Endothelial cell of umbilical vein (primary cell): ENCODE measurements at regions of chr2 and their contacts with region 1.

Region 1: DNA sequence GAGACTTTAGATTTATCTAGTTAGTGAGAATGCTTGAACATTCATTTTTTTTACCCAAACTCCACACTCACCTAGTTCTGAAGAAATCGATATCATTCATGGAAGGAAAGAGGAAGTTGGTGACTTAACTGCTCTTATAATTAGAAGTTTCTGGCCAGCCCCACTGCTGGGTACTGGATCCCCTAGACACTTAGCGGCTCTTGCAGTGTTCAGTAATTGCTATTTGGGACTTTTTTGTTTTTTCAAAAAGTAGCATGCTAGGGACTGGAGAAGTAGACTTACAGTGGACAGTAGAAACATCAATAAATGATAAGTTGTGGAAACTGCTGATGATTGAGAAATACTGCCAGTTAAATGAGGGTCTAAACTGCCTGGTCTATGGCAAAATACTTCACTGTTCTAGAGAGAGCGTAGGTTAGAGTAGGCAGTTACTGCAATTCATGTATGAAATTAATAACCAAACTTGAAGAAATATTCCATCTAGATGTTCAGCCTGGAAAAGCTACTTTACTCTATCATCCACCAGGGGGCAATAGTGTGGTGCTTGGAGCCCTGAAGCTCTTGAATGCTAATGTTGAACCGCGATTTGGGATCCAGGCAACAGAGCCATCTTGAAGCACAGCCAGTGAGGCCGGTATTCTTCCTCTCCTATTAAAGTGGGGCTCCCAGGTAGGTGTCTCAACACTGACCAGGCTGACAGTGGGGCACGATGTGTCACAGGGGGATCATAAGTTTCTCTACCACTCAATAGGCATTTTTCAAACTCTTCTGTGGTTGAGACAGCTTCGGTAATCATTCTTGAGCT is 146.1 kb upstream of the SESTD1 start:
- DNase-seq: peak; percentile 60
- H3K4me3 ChIP-seq: no peak overlapping the region
- H3K27ac ChIP-seq: no peak overlapping the region
- H3K4me1 ChIP-seq: no peaks in the 10 kb centered on the region
- H3K27me3 ChIP-seq: no peaks in the 10 kb centered on the region
- CTCF ChIP-seq: peak; percentile 67 to 68
- POLR2A ChIP-seq: no peak

Region 2: DNA sequence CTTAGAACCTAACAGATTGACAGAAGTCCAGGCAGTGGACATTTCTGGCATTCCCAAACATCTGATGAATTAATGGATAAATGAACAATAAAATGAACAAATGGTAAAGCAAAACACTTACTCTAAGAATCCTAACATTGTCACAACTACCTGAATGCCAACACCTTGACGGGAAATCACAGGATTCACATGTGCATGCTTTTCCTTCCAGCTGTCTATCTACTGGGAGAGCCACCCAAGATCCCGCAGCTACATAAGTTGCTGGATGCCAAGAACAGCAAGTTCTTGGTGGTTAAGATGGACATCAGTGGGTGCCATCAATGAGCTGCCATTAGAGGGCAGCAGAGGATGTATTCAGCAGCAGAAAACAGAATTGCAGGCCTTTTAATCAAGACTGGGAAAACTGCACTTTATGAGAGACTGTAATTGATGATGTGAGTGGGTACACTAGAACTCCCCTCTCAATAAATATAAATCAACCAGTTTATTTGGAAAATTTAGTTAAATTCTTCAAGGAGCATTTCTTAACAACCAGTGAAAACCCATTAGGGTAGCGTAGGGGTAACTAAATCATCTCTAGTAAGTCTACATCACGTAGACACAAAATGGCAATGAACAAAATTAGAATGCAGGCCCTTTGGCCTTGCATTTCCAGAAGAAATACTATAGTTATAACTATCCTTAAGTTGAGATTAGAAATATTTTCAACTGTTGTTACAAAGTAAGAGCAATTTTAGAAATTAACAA is 191.7 kb before region 1 on chr2:
- CTCF ChIA-PET with region 1: interaction called, 34 read pairs
- POLR2A ChIA-PET with region 1: no interaction called
- dilution Hi-C with region 1: no loop called
- intact Hi-C with region 1: loop called (anchors 1 kb)
- DNase-seq: peak; percentile 90
- H3K4me3 ChIP-seq: no peak overlapping the region
- H3K27ac ChIP-seq: no peak overlapping the region
- H3K4me1 ChIP-seq: no peaks in the 10 kb centered on the region
- H3K27me3 ChIP-seq: no peaks in the 10 kb centered on the region
- CTCF ChIP-seq: peak; percentile 82 to 85
- POLR2A ChIP-seq: no peak

Region 3: GRCh38 chr2:179422037-179422643 is 11.4 kb after region 1 on chr2:
- CTCF ChIA-PET with region 1: interaction called, 38 read pairs
- POLR2A ChIA-PET with region 1: no interaction called
- dilution Hi-C with region 1: no loop called
- intact Hi-C with region 1: no loop called
- DNase-seq: peak; percentile 68
- H3K4me3 ChIP-seq: no peak overlapping the region
- H3K27ac ChIP-seq: no peak overlapping the region
- H3K4me1 ChIP-seq: no peaks in the 10 kb centered on the region
- H3K27me3 ChIP-seq: peaks cover 2 to 5% of the 10 kb centered on the region in 2 experiments
- CTCF ChIP-seq: peak; percentile 74 to 79
- POLR2A ChIP-seq: no peak

Region 4: GRCh38 chr2:179751163-179751809 is 340.5 kb after region 1 on chr2:
- CTCF ChIA-PET with region 1: interaction called, 27 read pairs
- POLR2A ChIA-PET with region 1: no interaction called
- dilution Hi-C with region 1: no loop called
- intact Hi-C with region 1: loop called (anchors 1 kb)
- DNase-seq: peak; percentile 42
- H3K4me3 ChIP-seq: no peak overlapping the region
- H3K27ac ChIP-seq: no peak overlapping the region
- H3K4me1 ChIP-seq: no peaks in the 10 kb centered on the region
- H3K27me3 ChIP-seq: no peaks in the 10 kb centered on the region
- CTCF ChIP-seq: peak; percentile 34 to 36
- POLR2A ChIP-seq: no peak

Region 5: DNA sequence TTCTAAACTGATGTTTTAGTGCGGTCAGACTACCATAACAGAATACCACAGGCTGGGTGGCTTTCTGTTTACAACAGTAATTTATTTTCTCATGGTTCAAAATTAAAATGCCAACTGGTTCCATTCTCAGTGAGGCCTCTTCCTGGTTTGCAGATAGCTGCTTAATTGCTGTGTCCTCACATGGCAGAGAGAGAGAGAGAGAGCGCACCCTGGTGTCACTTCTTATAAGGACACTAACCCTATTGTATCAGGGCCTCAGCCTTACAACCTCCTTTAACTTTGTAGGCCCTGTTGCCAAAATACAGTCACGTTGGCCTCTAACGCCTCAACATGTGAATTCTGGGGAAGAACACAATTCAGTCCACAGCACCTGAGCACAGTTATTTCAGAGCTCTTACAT is 488.1 kb after region 1 on chr2:
- CTCF ChIA-PET with region 1: interaction called, 12 read pairs
- POLR2A ChIA-PET with region 1: no interaction called
- dilution Hi-C with region 1: no loop called
- intact Hi-C with region 1: loop called (anchors 5 kb)
- DNase-seq: peak; percentile 28
- H3K4me3 ChIP-seq: no peak overlapping the region
- H3K27ac ChIP-seq: no peak overlapping the region
- H3K4me1 ChIP-seq: no peaks in the 10 kb centered on the region
- H3K27me3 ChIP-seq: no peaks in the 10 kb centered on the region
- CTCF ChIP-seq: peak; percentile 30 to 49
- POLR2A ChIP-seq: no peak